ENCODE measurements at regions of chr14 and their contacts with region 1.

Region 1: GRCh38 chr14:71362920-71363584 is 455.8 kb downstream of the PCNX1 start:
- DNase-seq: peak; percentile 80
- ATAC-seq: peak; percentile 47
- H3K4me3 ChIP-seq: no peak overlapping the region
- H3K4me3 Mint-ChIP-seq: peak overlapping the region; percentile 81
- H3K27ac ChIP-seq: peak overlapping the region; percentile 89 to 95
- H3K27ac Mint-ChIP-seq: peak overlapping the region; percentile 94
- H3K4me1 ChIP-seq: peaks cover 80 to 86% of the 10 kb centered on the region in 2 donors
- H3K4me1 Mint-ChIP-seq: peaks cover 82% of the 10 kb centered on the region
- H3K27me3 ChIP-seq: no peaks in the 10 kb centered on the region
- H3K27me3 Mint-ChIP-seq: no peaks in the 10 kb centered on the region
- CTCF ChIP-seq: no peak

Region 2: DNA sequence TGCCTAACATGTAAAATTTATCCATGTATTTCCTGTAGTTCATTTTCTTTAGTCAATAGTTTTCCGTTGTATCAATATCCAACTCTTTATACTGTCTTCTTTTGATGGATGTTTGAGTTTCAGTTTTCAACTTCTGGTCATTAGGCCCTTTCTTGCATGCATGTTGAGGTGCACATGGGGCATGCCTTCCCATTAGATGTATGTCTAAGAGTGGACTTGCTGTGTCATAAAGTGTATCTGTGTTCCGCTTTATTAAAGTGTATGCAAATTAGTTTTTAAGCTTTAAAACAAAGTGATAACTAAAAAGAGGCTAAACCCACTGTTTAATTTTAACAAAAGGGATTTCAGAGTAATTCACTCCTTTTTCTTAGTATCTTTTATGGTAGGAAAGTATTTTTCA is 14.7 kb before region 1 on chr14:
- CTCF ChIA-PET with region 1: no interaction called
- POLR2A ChIA-PET with region 1: no interaction called
- intact Hi-C with region 1: loop called (anchors 2 kb)
- DNase-seq: no peak
- ATAC-seq: no peak
- H3K4me3 ChIP-seq: no peak overlapping the region
- H3K4me3 Mint-ChIP-seq: peak overlapping the region; percentile 64
- H3K27ac ChIP-seq: no peak overlapping the region
- H3K27ac Mint-ChIP-seq: no peak overlapping the region
- H3K4me1 ChIP-seq: peaks cover 31 to 39% of the 10 kb centered on the region in 2 donors
- H3K4me1 Mint-ChIP-seq: peaks cover 87% of the 10 kb centered on the region
- H3K27me3 ChIP-seq: no peaks in the 10 kb centered on the region
- H3K27me3 Mint-ChIP-seq: no peaks in the 10 kb centered on the region
- CTCF ChIP-seq: no peak

Measured in B cell (primary cell).